Motor neuron (in vitro differentiated cells): ENCODE measurements at regions of chr13 and their contacts with region 1.

Region 1: DNA sequence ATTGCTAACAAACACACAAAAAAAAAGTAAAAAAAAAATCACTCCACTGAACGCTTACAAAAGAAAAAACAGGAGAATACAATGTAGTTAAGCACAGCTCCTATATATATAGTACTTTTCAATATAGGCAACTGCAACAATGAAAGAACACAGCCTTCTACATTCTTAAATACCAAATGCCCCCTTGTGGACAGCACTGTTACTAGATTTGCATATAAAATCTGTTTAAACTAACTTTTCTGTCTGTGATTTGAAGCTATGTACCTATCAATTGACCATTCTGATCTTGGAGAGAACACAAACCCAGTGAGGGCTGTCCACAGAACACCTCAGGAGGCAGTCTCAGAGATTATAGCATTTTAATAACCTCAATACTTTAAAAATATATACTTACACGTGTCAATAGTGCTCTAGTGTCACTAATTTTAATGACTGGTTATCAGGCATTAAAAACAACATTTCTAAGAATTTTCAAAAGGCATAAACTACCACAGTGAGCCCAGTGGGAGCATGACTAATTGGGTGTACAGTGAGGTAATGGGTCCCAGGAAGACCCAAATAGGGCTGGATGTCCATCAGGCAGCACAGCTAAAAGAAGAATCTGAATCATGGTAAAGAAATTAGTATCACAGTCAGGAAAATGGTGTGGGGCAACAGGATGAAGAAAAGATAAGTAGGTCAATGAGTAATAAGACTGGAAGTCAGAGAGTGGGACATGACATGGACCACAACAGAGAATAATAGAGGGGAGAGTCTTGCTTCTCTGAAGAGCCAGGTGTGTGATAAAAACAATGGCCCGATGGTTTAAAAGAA is 22.2 kb downstream of the CCDC169 start:
- ATAC-seq: peak in 6 of 8 experiments; percentile 43 to 63 (median 46)
- H3K4me3 ChIP-seq: no peak overlapping the region
- H3K27ac ChIP-seq: no peak overlapping the region
- H3K4me1 ChIP-seq: no peaks in the 10 kb centered on the region

Region 2: GRCh38 chr13:35978603-35979316 is 296.6 kb before region 1 on chr13:
- in situ Hi-C with region 1: loop called in 8 of 9 experiments (anchors 5 to 25 kb)
- ATAC-seq: peak; percentile 28 to 75 (median 58)
- H3K4me3 ChIP-seq: no peak overlapping the region
- H3K27ac ChIP-seq: no peak overlapping the region
- H3K4me1 ChIP-seq: peaks cover 0 to 5% of the 10 kb centered on the region in 2 donors

Region 3: DNA sequence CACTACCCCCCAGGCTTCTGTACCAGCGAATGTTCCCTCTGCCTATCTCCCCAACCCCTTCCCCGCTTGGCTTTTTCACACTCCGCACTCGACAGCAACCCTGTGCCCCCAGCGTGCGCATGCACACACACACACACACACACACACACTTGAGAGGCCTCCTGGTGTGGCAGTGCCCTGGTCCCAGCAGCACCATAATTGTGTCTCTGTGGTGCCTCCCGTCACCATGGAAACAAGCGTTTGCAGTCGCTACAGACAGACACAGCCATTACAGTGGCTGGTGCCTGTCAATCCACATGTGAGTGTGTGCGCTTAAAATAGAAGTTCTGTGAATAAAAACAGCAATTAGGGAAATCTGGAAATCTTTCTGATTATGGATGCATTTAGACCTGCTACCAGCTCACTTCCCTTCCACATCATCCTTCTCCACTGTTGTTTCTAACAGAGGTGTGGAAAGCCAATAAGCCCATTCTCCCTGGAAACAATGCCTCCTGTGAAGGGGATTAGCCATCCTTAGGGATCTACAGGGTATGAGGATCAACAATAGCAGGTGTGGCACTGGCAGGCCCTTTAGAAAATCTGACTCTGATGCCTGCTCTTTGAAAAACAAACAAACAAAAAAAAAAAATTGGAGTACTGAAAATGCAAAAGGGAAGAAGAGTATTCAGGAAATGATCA is 290.5 kb before region 1 on chr13:
- in situ Hi-C with region 1: loop called in 4 of 9 experiments (anchors 10 to 25 kb)
- ATAC-seq: peak in 6 of 8 experiments; percentile 64 to 98 (median 98)
- H3K4me3 ChIP-seq: no peak overlapping the region
- H3K27ac ChIP-seq: peak overlapping the region in 1 of 2 donors; percentile 60
- H3K4me1 ChIP-seq: peaks cover 25 to 30% of the 10 kb centered on the region in 2 donors

Region 4: GRCh38 chr13:36030670-36031331 is 244.6 kb before region 1 on chr13:
- in situ Hi-C with region 1: no loop called
- ATAC-seq: peak in 2 of 8 experiments; percentile 34 to 48
- H3K4me3 ChIP-seq: no peak overlapping the region
- H3K27ac ChIP-seq: no peak overlapping the region
- H3K4me1 ChIP-seq: no peaks in the 10 kb centered on the region

Region 5: DNA sequence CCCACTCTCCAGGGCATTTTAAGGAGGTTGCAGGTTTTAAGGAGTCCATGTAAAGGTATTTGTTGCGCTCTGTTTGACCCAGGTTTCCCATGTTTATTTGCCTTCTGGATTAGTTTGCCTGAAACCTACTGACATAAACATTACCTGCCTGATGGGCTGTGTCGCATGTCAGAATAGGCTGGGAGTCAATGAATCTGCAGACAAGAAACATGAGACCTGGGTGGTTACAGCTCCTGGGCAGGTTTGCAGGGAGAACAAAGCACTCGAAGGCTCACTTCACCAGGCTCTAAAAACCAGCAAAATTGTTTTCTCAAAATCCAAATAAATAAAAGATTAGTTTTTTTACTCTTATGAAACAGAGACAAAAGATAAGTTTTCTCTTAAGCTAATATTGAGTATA is 284.0 kb after region 1 on chr13:
- in situ Hi-C with region 1: no loop called
- ATAC-seq: no peak
- H3K4me3 ChIP-seq: no peak overlapping the region
- H3K27ac ChIP-seq: no peak overlapping the region
- H3K4me1 ChIP-seq: no peaks in the 10 kb centered on the region